Cardiac septum (tissue), 1 donor: ENCODE measurements at regions of chr18 and their contacts with region 1.

Region 1: GRCh38 chr18:6056146-6056932 is 161.0 kb upstream of the TMEM200C start:
- DNase-seq: no peak

Region 2: DNA sequence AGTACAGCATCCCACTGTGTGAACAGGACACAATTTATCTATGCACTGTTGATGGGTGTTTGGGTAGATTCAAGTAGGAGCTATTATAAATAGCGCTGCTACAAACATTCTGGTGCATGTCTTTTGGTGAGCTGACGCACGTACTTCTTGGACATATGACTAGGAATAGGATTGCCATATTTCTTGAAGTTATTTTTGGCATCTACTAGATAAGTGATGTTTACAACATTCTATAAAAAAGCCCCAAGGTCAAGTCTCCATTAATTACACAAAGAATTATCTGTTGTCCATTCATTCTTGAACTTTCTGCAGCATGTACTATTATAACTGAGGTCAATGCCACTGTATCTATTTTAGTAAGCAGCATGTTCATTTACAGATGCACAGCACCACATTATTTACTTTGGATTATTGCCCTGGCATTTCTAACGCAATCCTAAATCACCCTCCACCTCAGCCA is 64.5 kb after region 1 on chr18:
- intact Hi-C with region 1: loop called (anchors 5 kb)
- DNase-seq: no peak

Region 3: DNA sequence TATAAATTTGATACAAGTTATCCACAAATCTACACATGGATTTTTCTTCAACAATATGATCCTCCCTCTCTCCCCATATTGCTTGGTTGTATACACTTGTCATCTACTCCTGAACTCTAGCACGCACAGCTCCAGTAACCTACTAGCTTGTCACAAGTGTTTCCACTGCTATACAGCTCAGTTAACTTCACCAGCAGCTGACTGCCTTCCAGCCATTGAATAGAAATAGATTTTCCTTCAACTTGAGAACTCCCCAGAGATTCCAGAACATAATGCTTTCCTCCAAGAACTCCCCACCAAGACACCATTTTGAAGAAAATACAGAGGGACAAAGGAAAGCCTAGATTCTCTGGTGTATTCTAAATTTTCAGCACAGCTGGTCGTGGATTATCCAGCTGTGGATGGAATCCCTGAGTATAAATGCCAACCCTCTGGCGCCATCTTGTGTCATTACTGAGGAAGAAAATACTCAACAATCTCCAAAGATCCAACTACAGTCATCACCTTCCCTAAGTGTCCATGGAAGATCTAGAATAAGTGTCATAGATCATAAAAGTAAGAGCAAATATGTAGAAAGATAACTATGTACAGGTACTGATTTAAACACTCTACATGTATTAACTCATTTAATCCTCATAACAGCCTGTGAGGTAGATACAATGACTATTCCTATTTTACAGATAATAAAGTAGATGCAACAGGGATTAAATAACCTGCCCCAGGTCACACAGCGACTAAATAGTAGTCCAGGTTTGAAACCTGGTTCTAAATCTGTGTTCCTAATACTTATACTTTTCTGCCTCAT is 829.9 kb after region 1 on chr18:
- intact Hi-C with region 1: no loop called
- DNase-seq: no peak